ENCODE measurements at regions of chr3 and their contacts with region 1.

Region 1: GRCh38 chr3:152480282-152480953 is 211.7 kb downstream of the MBNL1 start:
- DNase-seq: no peak
- ATAC-seq: no peak
- H3K4me3 ChIP-seq: no peak overlapping the region
- H3K27ac ChIP-seq: no peak overlapping the region
- H3K4me1 ChIP-seq: peaks cover 0 to 8% (median 0%) of the 10 kb centered on the region in 12 donors
- H3K27me3 ChIP-seq: no peaks in the 10 kb centered on the region
- CTCF ChIP-seq: no peak
- POLR2A ChIP-seq: no peak

Region 2: GRCh38 chr3:152519376-152519775 is 39.0 kb after region 1 on chr3:
- intact Hi-C with region 1: loop called in 6 of 10 experiments (anchors 5 to 10 kb)
- DNase-seq: no peak
- ATAC-seq: no peak
- H3K4me3 ChIP-seq: no peak overlapping the region
- H3K27ac ChIP-seq: no peak overlapping the region
- H3K4me1 ChIP-seq: no peaks in the 10 kb centered on the region
- H3K27me3 ChIP-seq: no peaks in the 10 kb centered on the region
- CTCF ChIP-seq: no peak
- POLR2A ChIP-seq: no peak

Region 3: DNA sequence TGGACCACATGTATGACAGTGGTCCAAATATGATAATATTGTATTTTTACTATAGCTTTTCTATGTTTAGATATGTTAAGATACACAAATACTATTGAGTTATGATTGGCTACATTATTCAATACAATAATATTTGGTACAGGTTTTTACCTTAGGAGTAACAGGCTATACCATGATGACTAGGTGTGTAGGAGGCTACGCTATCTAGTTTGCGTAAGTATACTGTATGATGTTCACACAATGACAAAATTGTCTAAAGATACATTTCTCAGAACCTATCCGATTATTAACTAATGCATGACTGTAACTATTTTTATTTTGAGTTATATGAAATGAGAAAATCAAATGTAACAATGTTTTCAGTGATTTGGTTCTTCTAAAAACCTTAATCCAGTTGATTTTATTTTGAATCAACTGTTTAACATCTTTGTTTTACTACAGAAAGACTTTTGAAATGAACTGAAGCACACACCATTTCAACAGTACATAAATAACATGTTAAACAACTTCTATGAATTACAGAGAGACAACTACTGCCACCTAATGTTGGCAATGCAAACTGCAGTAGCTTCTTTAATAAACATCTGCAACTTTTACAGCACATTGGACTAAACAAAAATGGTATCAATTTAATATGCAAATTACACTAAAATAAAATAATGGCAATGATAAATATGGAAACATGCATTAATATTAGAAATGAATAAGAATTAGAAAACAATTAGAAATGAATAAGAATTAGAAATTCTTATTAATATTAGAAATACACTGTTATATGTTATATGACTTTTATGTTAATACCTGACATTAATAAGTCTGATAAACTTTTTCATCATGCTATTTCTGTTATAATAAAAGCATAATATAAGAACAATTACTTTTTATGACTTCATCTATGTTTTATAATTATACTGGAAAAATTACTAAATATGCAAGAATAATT is 44.1 kb after region 1 on chr3:
- intact Hi-C with region 1: loop called in 6 of 10 experiments (anchors 5 to 10 kb)
- DNase-seq: peak in 2 of 5 donors; percentile 22 to 35
- ATAC-seq: no peak
- H3K4me3 ChIP-seq: no peak overlapping the region
- H3K27ac ChIP-seq: no peak overlapping the region
- H3K4me1 ChIP-seq: no peaks in the 10 kb centered on the region
- H3K27me3 ChIP-seq: no peaks in the 10 kb centered on the region
- CTCF ChIP-seq: peak; percentile 77 to 94 (median 86)
- POLR2A ChIP-seq: no peak

Region 4: GRCh38 chr3:152574461-152575079 is 94.2 kb after region 1 on chr3:
- intact Hi-C with region 1: loop called in 9 of 10 experiments (anchors 2 to 10 kb)
- DNase-seq: peak; percentile 49 to 78 (median 56)
- ATAC-seq: peak; percentile 78 to 90 (median 86)
- H3K4me3 ChIP-seq: no peak overlapping the region
- H3K27ac ChIP-seq: peak overlapping the region in 1 of 12 donors; percentile 16
- H3K4me1 ChIP-seq: peaks cover 0 to 11% (median 1%) of the 10 kb centered on the region in 12 donors
- H3K27me3 ChIP-seq: no peaks in the 10 kb centered on the region
- CTCF ChIP-seq: peak; percentile 36 to 71 (median 65)
- POLR2A ChIP-seq: no peak